A549 (cell line): ENCODE measurements at regions of chr3 and their contacts with region 1.

Region 1: DNA sequence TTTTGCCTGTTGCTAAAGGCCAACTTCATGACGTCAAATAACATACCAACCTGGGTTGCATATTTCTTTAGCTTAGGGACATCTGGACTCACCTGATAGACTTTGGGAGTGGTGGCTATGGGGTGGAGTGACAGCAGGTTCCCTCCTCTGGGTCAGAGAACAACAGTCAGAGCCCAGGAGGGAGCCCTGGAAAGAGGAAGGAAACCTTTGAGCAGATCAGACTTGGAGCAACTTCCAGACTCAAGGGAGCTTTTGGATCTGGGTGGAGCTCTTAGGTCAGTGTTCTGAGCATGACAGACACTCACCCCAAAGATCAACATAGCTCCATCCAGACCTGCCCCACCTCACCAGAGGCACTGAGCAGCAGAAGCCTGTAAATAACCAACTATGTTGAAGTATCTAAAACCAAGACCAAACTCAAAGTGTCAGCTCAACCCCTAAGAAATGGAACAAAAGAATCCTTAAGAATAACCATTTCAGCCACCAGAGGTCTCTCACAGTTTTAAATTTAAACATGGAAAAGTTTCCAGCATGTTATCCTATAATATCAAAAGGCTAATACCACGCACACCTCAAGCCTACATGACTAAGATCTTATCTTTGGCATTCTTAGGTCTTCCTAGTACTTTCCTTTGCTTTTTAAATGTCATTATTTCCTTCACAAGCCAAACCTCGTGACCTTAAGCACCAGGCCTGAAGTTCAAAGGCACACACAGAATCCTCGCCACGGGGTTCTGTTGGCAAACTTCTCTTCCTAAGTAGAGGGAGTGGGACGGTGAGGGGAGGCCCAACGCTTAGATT is 56.4 kb downstream of the UMPS start:
- DNase-seq: peak in 1 of 2 experiments; percentile 66
- ATAC-seq: peak; percentile 62 to 65
- H3K4me3 ChIP-seq: no peak overlapping the region
- H3K27ac ChIP-seq: peak overlapping the region; percentile 76 to 85
- H3K4me1 ChIP-seq: peaks cover 58% of the 10 kb centered on the region
- CTCF ChIP-seq: peak; percentile 65
- EP300 ChIP-seq: no peak
- POLR2A ChIP-seq: no peak
- RAD21 ChIP-seq: peak; percentile 71 to 78

Region 2: DNA sequence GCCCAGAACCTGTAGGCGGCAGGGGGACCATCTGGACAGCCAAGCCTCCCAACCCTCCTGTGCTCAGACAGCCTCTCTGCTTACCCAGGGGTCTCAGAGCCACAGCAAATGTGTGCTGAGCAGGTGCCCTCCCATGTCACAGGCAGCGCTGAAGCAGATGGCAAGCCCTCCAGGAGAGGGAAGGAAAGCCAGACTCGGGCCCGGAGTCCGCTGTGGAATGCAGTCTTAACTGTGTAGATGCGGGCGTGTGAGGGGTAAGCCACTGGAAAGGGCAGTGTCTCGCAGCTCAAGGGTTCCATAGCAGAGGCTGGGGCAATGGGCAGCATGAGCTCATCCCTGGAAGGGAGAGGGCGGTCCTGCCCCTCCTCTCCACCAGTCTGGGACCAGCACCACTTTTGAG is 10.8 kb before region 1 on chr3:
- CTCF ChIA-PET with region 1: interaction called, 21 read pairs
- POLR2A ChIA-PET with region 1: no interaction called
- DNase-seq: no peak
- ATAC-seq: no peak
- H3K4me3 ChIP-seq: no peak overlapping the region
- H3K27ac ChIP-seq: peak overlapping the region in 1 of 2 experiments; percentile 82; a peak in 3 of 6 replicates
- H3K4me1 ChIP-seq: peaks cover 58% of the 10 kb centered on the region
- CTCF ChIP-seq: no peak
- EP300 ChIP-seq: no peak
- POLR2A ChIP-seq: no peak
- RAD21 ChIP-seq: no peak

Region 3: DNA sequence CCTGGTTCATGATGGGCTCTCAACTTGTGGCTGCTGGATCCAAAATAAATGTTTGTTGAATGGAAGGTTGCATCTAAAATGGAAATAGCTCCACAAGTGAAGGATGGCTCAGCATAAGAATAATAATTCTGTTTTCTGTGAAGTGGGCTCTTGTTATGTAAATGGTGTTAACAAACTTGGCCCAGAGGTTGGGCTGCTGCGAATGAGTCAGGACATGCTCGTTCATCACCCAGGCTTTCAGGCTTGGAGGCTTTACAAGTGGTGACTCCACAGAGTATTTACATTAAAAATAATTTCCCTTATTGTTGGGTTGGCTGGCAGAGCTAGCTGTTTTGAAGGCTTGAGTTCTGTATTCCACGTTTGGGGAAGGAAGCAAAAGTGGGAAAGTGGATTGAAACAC is 40.1 kb after region 1 on chr3:
- CTCF ChIA-PET with region 1: interaction called, 16 read pairs
- POLR2A ChIA-PET with region 1: no interaction called
- DNase-seq: no peak
- ATAC-seq: peak; percentile 51 to 62; a peak in 4 of 6 replicates
- H3K4me3 ChIP-seq: no peak overlapping the region
- H3K27ac ChIP-seq: peak overlapping the region; percentile 52 to 81
- H3K4me1 ChIP-seq: peaks cover 54% of the 10 kb centered on the region
- CTCF ChIP-seq: no peak
- EP300 ChIP-seq: no peak
- POLR2A ChIP-seq: no peak
- RAD21 ChIP-seq: no peak

Region 4: DNA sequence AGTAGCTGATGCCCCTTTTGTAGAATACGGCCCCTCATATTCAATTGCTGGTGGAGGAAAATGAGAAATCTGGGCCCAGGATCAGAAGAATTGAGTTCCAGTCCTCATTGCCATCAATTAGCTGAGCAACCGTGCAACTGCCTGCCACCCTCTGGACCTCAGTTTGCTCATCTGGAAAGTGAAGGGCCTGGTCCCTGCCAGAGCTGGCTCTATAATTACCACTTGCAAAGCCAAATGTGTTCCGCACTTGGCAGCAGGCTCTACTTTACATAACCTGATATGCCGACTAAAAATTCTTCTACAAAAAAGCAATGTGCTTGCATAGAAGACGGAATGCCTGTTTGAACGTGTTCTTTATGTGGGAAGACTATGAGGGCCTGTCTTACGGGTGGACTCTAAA is 109.1 kb after region 1 on chr3:
- CTCF ChIA-PET with region 1: interaction called, 205 read pairs
- POLR2A ChIA-PET with region 1: interaction called, 3 read pairs
- DNase-seq: no peak
- ATAC-seq: no peak
- H3K4me3 ChIP-seq: no peak overlapping the region
- H3K27ac ChIP-seq: no peak overlapping the region
- H3K4me1 ChIP-seq: peaks cover 24% of the 10 kb centered on the region
- CTCF ChIP-seq: no peak
- EP300 ChIP-seq: no peak
- POLR2A ChIP-seq: no peak
- RAD21 ChIP-seq: no peak